ENCODE measurements at regions of chr1 and their contacts with region 1.

Region 1: GRCh38 chr1:172582893-172583292 is 49.9 kb downstream of the SUCO start:
- DNase-seq: no peak
- H3K4me3 Mint-ChIP-seq: no peak overlapping the region
- H3K27ac Mint-ChIP-seq: no peak overlapping the region
- H3K4me1 Mint-ChIP-seq: peaks cover 12% of the 10 kb centered on the region
- H3K27me3 Mint-ChIP-seq: no peaks in the 10 kb centered on the region

Region 2: GRCh38 chr1:172545396-172546004 is 37.4 kb before region 1 on chr1:
- intact Hi-C with region 1: no loop called
- DNase-seq: no peak
- H3K4me3 Mint-ChIP-seq: no peak overlapping the region
- H3K27ac Mint-ChIP-seq: no peak overlapping the region
- H3K4me1 Mint-ChIP-seq: peaks cover 23% of the 10 kb centered on the region
- H3K27me3 Mint-ChIP-seq: no peaks in the 10 kb centered on the region

Region 3: DNA sequence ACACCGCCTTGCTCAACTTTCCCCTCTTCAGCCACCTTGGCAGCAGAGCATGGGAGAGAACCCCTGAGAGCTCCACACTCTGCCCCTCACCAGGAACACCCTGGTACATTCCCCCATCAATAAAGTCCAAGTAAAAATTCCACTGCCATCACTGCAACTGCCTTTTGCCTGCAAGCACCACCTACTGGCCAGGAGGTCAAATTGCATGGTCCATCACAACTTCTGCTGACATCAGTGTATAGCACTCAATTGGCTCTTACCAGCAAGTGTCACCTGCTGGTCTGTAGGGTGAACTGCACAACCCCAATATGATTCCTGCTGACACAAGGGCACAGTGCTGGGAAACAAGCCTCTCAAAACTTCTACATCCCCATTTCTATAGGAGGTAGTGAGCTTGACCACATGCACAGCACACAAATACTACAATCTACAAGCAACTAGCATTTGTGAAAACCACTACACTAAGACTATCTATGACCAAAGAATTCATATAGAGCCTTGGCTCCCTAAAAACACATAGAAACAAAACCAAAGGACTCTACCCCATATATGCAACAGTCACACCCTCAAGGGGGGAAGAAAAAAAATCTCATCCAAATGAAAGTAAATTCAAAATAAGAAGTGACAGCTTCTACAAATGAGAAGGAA is 145.2 kb after region 1 on chr1:
- intact Hi-C with region 1: loop called (anchors 1 kb)
- DNase-seq: peak; percentile 37
- H3K4me3 Mint-ChIP-seq: no peak overlapping the region
- H3K27ac Mint-ChIP-seq: no peak overlapping the region
- H3K4me1 Mint-ChIP-seq: peaks cover 18% of the 10 kb centered on the region
- H3K27me3 Mint-ChIP-seq: peaks cover 15% of the 10 kb centered on the region